Psoas muscle (tissue), 8 donors: ENCODE measurements at regions of chr1 and their contacts with region 1.

Region 1: DNA sequence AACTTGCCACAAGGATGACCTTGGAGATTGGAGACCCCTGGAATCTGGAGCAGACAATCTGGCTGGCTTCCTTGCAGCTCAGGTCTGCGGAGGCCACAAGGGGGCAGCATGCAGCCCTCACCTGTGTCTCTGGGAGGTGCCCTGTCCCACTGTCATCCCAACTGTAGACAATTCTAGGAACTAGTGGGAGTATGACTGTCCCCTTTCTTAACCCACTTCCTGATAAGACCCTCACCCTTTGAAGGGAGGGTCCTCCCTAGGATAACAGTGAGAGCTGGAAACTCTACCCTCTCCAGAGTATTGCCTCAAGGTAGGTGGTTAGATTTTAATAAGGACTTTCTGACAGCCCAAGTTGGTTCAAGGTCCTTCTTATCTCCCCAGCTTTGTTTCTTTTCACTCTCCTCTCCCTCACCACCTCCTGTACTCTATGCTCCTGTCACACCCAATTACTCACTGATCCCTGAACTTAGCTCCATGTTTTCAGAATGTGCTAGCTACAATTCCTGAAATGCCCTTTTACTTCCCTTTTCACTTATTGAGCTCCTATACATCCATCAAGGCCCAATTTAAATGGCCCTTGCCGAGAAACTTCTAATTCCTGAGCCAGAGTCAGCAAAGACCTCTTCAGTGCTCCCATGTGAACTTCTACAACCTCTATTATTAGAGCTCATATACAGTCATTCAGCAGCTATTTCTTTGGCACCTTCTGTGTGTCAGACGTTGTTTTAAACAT is 9.2 kb upstream of the KCNQ4 start:
- DNase-seq: peak in 1 of 2 donors; percentile 77
- ATAC-seq: peak; percentile 70 to 76 (median 72)
- H3K4me3 ChIP-seq: no peak overlapping the region
- H3K27ac ChIP-seq: no peak overlapping the region
- H3K4me1 ChIP-seq: peaks cover 8% of the 10 kb centered on the region
- H3K27me3 ChIP-seq: no peaks in the 10 kb centered on the region
- CTCF ChIP-seq: peak; percentile 82

Region 2: DNA sequence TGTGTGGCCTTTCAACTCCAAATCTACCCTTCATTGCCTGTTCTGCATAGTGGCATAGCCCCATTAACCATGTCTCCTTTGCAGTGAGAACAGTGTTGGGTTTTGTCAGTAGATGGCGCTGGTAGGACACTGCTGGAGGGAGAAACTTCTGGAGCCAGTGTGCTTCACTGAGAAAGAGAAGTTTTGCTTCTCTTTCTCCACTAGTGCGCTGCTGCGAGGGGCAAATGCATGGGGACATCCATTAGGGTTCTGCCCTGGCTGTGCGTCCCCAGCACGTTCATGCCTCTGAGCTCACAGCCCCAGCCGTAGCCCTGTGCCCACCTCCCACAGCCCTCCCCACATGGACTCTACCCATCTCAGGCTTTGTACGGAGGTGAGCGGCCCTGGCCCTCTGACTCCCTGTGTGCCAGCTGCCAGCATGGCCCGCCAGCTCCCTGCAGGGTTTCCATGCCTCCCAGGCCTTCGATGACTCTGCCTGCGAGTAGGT is 162.0 kb before region 1 on chr1:
- intact Hi-C with region 1: loop called in 1 of 2 experiments (anchors 5 kb)
- DNase-seq: peak in 1 of 2 donors; percentile 27
- ATAC-seq: peak; percentile 75 to 95 (median 93)
- H3K4me3 ChIP-seq: no peak overlapping the region
- H3K27ac ChIP-seq: no peak overlapping the region
- H3K4me1 ChIP-seq: no peaks in the 10 kb centered on the region
- H3K27me3 ChIP-seq: no peaks in the 10 kb centered on the region
- CTCF ChIP-seq: peak; percentile 86

Region 3: DNA sequence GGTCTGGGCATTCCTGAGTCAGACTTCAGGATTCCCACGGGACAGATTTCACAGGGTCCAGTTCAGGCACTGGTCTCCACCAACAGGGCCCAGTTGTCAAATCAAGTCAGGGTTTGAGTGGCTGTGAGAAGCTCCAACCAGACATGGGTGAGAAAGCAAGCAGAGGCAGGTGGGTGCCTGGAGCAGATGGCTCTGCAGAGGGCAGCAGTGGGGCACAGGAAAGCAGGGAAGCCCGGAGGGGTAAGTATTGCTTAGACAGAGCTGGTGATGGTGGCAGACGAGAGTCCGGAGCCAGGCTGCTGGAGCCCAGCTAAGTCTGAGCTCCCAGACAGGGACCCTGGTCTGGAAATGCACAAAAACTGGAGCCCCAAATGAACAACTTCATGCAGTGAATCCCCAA is 149.4 kb before region 1 on chr1:
- intact Hi-C with region 1: loop called in 1 of 2 experiments (anchors 10 kb)
- DNase-seq: no peak
- ATAC-seq: peak; percentile 57 to 68 (median 64)
- H3K4me3 ChIP-seq: no peak overlapping the region
- H3K27ac ChIP-seq: no peak overlapping the region
- H3K4me1 ChIP-seq: no peaks in the 10 kb centered on the region
- H3K27me3 ChIP-seq: no peaks in the 10 kb centered on the region
- CTCF ChIP-seq: peak; percentile 30

Region 4: GRCh38 chr1:40708750-40709099 is 65.7 kb before region 1 on chr1:
- intact Hi-C with region 1: no loop called
- DNase-seq: no peak
- ATAC-seq: peak; percentile 59 to 71 (median 63)
- H3K4me3 ChIP-seq: peak overlapping the region; percentile 75
- H3K27ac ChIP-seq: peak overlapping the region; percentile 81
- H3K4me1 ChIP-seq: peaks cover 62% of the 10 kb centered on the region
- H3K27me3 ChIP-seq: no peaks in the 10 kb centered on the region
- CTCF ChIP-seq: no peak

Region 5: DNA sequence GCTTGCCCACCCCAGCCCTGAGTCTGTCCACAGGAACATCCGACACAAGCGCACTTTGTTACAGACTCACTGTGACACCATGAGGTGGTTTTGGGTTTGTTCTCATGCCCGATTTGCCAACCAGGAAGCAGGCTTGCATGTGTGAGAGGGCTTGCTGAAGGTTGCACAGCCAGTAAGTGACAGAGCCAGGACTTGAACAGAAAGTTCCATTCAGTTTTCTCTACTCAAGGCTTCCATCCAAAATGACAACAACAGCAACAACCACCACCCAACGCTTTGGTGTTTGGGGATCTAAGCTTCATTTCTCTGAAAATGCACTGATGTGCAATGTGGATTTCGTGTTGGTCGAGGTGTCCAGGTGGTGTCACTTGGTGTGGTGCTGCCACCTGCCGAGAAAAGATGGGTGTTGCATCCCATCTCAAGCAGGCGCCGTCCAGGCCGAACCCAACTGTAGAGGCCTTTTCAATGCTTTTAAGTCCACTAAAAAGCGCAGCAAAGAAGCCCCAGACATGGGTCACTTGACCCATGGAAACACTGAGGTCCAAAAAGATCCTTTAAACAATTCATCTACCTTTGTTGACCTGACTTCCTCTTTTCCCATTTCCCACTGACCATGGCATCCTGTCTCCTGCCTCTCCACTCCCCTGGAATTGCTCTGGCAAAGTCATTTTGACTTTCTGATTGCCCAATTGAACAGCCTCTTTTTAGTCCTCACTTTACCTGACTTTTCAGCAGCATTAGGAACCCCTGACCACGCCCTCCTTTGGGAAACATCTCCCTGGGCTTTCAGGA is 75.6 kb after region 1 on chr1:
- intact Hi-C with region 1: loop called (anchors 2 kb)
- DNase-seq: peak; percentile 58 to 79
- ATAC-seq: peak; percentile 80 to 95 (median 88)
- H3K4me3 ChIP-seq: no peak overlapping the region
- H3K27ac ChIP-seq: no peak overlapping the region
- H3K4me1 ChIP-seq: no peaks in the 10 kb centered on the region
- H3K27me3 ChIP-seq: no peaks in the 10 kb centered on the region
- CTCF ChIP-seq: peak; percentile 90

Region 6: GRCh38 chr1:40901886-40902852 is 127.7 kb after region 1 on chr1:
- intact Hi-C with region 1: no loop called
- DNase-seq: peak; percentile 48 to 71
- ATAC-seq: peak in 1 of 4 donors; percentile 22
- H3K4me3 ChIP-seq: no peak overlapping the region
- H3K27ac ChIP-seq: no peak overlapping the region
- H3K4me1 ChIP-seq: no peaks in the 10 kb centered on the region
- H3K27me3 ChIP-seq: no peaks in the 10 kb centered on the region
- CTCF ChIP-seq: no peak

Region 7: GRCh38 chr1:40951943-40952743 is 177.7 kb after region 1 on chr1:
- intact Hi-C with region 1: loop called in 1 of 2 experiments (anchors 10 kb)
- DNase-seq: peak; percentile 59 to 79
- ATAC-seq: peak; percentile 83 to 92 (median 86)
- H3K4me3 ChIP-seq: no peak overlapping the region
- H3K27ac ChIP-seq: no peak overlapping the region
- H3K4me1 ChIP-seq: no peaks in the 10 kb centered on the region
- H3K27me3 ChIP-seq: peaks cover 0 to 16% (median 0%) of the 10 kb centered on the region in 3 donors
- CTCF ChIP-seq: peak; percentile 90